GM13976 (cell line): ENCODE measurements at regions of chr1 and their contacts with region 1.

Region 1: GRCh38 chr1:78114034-78114956 is 68.5 kb downstream of the GIPC2 start:
- DNase-seq: peak; percentile 60
- CTCF ChIP-seq: peak; percentile 78

Region 2: DNA sequence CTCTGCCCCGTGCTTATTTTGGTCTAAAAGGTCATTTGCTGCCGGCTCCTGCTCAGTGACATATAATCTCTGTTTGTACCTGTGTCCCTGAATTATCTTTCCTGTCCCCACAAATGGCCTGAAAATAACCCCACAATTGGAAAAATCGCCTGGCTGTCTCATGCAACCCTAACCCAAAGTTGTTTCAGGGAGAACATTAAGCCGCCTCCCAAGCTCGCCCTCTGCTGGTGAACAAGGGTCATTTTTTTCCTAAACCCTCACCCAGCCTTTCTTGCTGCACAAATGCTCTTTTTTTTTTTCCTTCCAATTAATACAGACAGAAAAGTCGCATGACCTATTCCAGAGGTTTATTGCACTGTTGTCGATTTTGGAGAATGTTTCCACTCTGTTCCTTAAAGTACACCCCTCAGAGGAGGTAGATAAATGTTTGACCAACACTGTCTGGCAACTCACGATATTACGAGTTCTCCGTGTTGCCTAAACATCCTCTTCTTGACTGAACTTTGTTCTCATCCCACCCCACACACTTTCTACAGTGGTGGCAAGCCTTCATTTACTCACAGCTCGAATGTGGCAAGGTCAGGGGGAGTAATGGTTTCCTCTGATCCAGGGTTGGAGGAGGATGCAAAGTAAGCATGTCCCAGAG is 580.5 kb before region 1 on chr1:
- in situ Hi-C with region 1: loop called (anchors 25 kb)
- DNase-seq: peak; percentile 71
- CTCF ChIP-seq: peak; percentile 73

Region 3: DNA sequence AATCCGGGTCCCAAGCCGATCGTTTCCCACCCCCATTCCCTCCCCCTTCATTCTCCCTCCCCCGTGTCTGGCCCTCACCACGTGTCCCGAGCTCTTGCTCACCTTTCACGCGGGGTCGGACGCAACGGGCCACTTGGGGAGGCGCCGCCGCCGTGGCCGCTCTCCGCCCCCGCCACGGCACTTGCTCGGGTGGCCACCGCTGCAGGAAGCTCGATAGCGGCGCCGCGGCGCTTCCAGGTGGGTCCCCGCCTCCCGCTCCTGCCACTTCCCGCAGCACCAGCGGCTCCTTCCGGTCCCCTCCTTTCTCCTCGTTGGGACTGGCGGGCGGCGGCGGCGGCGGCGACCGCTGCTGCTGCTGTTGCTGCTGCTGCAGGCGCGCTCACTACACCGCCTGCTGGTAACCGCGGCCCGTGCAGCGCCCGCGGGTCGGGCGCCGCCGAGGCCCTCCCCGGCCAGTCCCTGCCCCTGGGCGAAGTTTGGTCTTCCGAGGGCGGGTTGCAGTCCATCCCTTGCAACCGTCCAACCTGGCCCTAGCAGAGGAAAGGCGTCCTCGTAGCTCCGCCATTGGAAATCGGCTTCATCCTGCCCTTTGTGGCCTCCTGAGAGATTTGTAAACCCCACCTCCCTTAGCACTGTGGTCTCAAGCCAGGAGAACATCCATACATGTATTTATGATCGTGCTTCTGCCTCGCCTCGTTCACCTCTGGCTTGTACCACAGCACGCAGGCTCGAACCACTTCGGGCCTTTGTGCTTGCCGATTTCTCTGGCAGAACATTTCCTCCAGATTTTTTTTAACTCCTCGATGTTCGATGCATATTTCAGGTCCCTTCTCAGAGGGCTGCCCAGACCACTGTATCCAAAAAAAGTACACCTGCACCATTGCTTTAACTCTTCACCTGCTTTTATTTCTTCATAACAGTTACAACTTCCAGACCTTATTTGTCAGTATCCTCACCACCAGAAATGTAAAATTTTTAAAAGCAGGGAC is 430.8 kb before region 1 on chr1:
- in situ Hi-C with region 1: loop called (anchors 25 kb)
- DNase-seq: peak; percentile 90
- CTCF ChIP-seq: peak; percentile 88

Region 4: DNA sequence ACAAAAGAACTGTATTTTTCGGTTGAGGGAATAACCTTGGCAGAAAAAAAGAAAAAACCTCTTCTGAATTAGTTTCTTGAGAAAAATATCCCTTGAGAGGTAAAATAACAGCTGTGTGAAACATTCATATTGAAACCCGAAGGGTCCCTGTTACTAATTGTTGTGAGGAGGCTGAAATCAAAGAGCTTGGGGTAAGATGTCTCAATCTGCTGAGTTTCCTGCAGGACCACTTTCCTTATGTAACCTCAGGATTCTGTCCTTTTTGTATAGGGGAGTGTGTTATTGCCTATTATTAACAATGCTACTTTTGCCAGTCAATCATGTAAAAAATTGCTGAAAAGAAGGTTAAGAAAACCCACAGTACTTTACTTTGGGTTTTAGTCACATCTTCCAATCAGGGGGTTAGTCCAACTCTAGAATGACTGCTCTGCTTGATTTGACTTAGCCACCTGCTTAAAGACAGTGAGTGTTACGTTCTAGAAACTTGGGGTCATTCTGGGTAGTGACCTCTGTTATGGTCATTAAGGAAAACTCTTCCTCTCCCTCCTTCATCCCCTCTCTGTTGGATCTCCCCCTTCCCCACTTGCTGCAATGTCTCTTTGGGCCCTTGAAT is 70.3 kb after region 1 on chr1:
- in situ Hi-C with region 1: no loop called
- DNase-seq: no peak
- CTCF ChIP-seq: no peak

Region 5: DNA sequence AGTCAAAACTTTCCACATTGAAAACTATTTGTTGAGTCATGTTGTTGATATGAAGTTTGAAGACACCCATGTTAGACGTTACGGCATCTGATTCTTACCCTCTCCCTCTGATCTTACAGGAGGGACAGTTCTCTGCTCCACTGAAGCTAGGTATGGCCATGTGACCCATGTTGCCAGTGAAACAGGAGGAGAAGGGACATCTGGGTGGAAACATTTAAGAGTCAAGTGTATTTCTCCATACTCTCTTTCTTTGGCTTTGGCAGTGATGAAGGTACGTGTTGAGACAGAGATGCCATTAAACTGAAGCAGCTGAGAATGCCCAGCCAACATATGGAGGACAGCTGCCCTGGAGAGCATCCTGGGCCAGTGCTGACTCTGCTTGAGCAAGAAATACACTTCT is 178.1 kb after region 1 on chr1:
- in situ Hi-C with region 1: no loop called
- DNase-seq: no peak
- CTCF ChIP-seq: no peak